PC-9 (cell line): ENCODE measurements at regions of chr6 and their contacts with region 1.

Region 1: DNA sequence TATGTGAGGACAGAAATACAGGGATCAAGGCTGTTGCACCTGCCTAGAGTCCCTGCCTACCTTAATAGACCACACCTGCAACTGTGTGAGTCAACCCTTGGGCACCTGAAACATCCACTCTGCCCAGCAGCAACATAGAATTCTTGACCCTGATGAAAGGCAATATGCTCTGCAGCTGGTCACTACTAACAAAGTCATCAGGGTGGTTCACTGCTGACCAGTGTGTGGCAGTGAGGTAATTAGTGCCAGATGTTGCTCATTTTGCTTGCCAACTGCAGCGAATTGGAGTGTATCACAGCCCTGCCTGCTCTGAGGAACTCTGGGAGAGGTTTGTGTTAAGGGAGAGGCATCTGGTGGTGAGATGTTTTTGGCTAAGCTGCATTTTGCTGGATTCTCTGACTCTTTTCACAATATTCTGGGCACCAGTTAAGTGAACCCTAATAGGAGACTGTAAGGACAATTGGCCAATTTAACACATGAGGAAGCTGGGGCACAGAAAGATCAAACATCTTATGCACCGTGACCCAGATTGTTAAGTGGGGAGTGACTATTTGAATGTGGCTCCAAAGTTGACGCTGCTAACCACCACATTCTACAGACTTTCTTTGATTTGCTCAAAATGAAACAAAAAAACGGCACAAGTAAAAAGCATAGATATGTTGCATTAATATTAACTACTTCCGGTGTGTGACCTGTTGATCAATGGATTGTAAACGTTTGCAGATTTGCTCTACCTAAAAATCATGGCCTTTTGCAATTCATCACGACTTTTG is 61.9 kb upstream of the OPRM1 start:
- DNase-seq: peak; percentile 58 to 60
- H3K4me3 ChIP-seq: no peak overlapping the region
- H3K27ac ChIP-seq: no peak overlapping the region
- H3K4me1 ChIP-seq: no peaks in the 10 kb centered on the region
- H3K27me3 ChIP-seq: no peaks in the 10 kb centered on the region
- CTCF ChIP-seq: no peak

Region 2: DNA sequence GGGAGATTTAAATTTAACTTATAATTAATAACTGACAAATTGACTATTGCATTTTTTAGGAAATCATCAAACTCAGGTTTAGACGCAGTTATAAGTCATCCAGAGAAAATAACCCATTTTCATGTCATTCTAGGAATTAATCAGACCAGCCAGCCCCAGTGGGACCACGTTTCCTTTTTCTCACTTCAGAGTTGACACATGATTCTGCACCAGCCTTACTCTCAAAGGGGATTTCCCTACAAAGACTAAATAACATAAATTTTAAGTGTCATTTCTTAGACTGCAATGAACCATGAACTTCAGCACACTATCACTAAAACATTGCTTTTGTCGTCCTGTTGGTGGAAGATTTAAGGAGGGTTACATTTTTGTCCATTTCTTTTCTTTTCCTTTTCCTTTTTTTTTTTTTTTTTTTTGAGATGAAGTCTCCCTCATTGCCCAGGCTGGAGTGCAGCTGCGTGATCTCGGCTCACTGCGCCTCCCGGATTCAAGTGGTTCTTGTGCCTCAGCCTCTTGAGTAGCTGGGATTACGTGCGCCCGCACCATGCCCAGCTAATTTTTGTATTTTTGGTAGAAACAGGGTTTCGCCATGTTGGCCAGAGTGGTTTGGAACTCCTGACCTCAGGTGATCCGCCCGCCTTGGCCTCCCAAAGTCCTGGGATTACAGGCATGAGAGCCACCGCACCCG is 375.9 kb after region 1 on chr6:
- CTCF ChIA-PET with region 1: no interaction called
- POLR2A ChIA-PET with region 1: no interaction called
- intact Hi-C with region 1: loop called (anchors 10 kb)
- DNase-seq: no peak
- H3K4me3 ChIP-seq: no peak overlapping the region
- H3K27ac ChIP-seq: no peak overlapping the region
- H3K4me1 ChIP-seq: no peaks in the 10 kb centered on the region
- H3K27me3 ChIP-seq: no peaks in the 10 kb centered on the region
- CTCF ChIP-seq: no peak